ENCODE measurements at regions of chr14 and their contacts with region 1.

Region 1: DNA sequence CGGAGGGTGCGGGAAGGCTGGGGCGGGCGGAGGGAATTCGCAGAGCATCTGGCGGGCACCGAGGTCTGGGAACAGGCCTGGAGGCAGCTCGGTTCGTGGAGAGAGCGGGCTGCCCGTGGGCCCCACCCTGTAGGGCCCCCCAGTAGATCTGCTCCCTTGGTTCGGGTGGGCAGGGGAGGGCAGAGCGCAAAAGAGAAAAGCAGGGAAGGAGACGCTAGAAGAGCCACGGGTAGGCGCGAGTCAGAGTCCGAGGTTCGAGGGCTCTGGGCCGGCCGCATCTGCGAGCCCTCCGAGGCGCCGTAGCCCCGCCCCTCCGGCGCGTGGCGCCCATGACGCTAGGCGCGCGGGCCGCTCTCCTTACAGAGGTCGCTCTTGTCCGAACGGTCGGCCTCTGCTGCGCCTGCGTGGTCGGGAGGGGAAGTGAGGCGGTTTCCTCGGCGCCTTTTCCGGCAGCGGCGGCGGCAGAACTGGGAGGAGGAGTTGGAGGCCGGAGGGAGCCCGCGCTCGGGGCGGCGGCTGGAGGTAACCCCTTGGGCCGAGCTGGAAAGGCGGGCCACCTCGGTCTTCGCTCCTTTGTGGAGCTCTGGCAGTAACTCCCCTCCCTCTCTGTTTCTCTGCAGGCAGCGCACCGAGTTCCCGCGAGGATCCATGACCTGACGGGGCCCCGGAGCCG is at the start of gene ARF6:
- DNase-seq: peak; percentile 99
- ATAC-seq: peak; percentile 81
- H3K4me3 ChIP-seq: peak within 1 kb of the TSS; percentile 91
- H3K27ac ChIP-seq: peak within 1 kb of the TSS; percentile 94
- H3K4me1 ChIP-seq: peaks cover 24% of the 10 kb centered on the region
- H3K27me3 ChIP-seq: no peaks in the 10 kb centered on the region
- CTCF ChIP-seq: no peak
- total RNA-seq, gene ARF6: 86.4 and 107 TPM in 2 replicates

Region 2: GRCh38 chr14:49879683-49880204 is 13.0 kb before region 1 on chr14:
- CTCF ChIA-PET with region 1: interaction called, 5 read pairs
- POLR2A ChIA-PET with region 1: no interaction called
- intact Hi-C with region 1: loop called (anchors 1 kb)
- DNase-seq: peak; percentile 80
- ATAC-seq: peak; percentile 83
- H3K4me3 ChIP-seq: no peak overlapping the region
- H3K27ac ChIP-seq: no peak overlapping the region
- H3K4me1 ChIP-seq: peaks cover 10% of the 10 kb centered on the region; the same call in 1 of the 2 replicates
- H3K27me3 ChIP-seq: no peaks in the 10 kb centered on the region
- CTCF ChIP-seq: peak; percentile 79

Region 3: DNA sequence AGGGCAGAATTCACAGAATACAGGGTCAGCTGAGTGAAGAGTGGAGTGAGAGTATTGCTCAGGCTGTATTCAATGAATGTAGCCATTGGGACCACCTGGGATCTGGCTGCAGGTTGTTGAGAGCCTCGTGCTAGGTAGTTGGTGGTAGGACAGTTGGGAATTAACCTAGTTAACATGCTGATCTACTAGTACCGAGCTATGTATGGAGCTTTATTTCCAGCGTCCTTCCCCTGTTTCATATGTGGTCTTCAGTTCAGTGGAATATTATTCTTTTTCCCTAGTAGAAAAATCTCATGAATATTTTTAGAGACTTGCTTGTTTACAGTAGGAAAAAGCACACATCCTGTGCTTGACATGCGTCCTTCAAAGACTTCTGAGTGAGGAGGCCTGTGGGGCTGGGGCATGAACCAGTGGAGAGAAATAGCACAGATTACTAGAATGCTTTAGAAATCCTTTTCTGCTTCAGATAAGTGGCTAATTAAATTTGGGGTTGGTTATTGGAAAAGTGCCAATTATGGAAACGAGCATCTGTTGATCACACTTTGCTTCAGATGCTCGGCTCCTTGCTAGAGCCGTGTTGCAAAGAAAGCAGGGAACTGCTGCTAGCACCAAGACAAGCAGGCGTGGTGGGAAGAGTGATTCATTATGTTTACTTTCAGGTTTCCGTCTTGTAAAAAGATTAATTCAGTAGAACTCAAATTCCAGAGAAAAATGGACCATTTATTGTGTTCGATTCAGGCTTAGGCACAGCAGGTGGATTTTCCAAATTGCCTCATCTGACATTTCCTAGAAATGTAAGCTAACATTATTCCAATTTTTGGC is 53.8 kb after region 1 on chr14:
- CTCF ChIA-PET with region 1: no interaction called
- POLR2A ChIA-PET with region 1: interaction called, 7 read pairs
- intact Hi-C with region 1: loop called (anchors 2 kb)
- DNase-seq: peak; percentile 93
- ATAC-seq: peak; percentile 82
- H3K4me3 ChIP-seq: peak overlapping the region; percentile 23; the same call in 1 of the 2 replicates
- H3K27ac ChIP-seq: peak overlapping the region; percentile 65
- H3K4me1 ChIP-seq: peaks cover 50% of the 10 kb centered on the region
- H3K27me3 ChIP-seq: no peaks in the 10 kb centered on the region
- CTCF ChIP-seq: no peak

Region 4: DNA sequence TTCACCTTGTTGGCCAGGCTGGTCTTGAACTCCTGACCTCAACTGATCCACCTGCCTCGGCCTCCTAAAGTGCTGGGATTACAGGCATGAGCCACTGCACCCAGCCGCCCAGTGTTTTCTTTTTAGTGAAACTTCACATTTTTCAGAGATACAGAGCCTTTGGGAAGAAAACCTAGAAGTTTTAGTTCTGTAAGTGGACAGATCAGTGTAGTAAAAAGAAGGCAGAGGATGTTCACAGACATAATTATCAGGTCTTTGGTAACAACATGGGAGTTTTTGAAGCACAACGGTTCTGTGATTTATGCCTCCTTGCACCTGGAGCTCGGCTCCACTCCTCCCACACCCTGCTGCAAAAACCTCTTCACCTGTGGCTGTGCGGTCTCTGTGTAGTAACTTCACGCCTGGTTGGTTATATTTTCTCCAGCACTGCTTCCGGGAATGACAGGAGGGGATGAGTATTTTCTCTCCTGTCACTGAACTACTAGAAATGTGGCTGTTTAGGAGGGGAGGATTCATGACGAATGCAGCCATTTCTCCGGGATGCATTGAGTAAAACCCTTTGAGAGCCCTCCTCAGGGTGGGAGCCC is 67.1 kb after region 1 on chr14:
- CTCF ChIA-PET with region 1: no interaction called
- POLR2A ChIA-PET with region 1: no interaction called
- intact Hi-C with region 1: loop called (anchors 2 kb)
- DNase-seq: no peak
- ATAC-seq: no peak
- H3K4me3 ChIP-seq: no peak overlapping the region
- H3K27ac ChIP-seq: no peak overlapping the region
- H3K4me1 ChIP-seq: peaks cover 30% of the 10 kb centered on the region
- H3K27me3 ChIP-seq: no peaks in the 10 kb centered on the region
- CTCF ChIP-seq: no peak

Region 5: GRCh38 chr14:50060871-50061663 is 168.3 kb after region 1 on chr14:
- CTCF ChIA-PET with region 1: no interaction called
- POLR2A ChIA-PET with region 1: no interaction called
- intact Hi-C with region 1: loop called (anchors 5 kb)
- DNase-seq: peak; percentile 88
- ATAC-seq: peak; percentile 66
- H3K4me3 ChIP-seq: no peak overlapping the region
- H3K27ac ChIP-seq: peak overlapping the region; percentile 96
- H3K4me1 ChIP-seq: peaks cover 38% of the 10 kb centered on the region
- H3K27me3 ChIP-seq: no peaks in the 10 kb centered on the region
- CTCF ChIP-seq: peak; percentile 33; the same call in 1 of the 2 replicates

Region 6: GRCh38 chr14:50109342-50109741 is 216.6 kb after region 1 on chr14:
- CTCF ChIA-PET with region 1: no interaction called
- POLR2A ChIA-PET with region 1: no interaction called
- intact Hi-C with region 1: loop called (anchors 1 kb)
- DNase-seq: peak; percentile 38
- ATAC-seq: peak; percentile 16; the same call in 1 of the 2 replicates
- H3K4me3 ChIP-seq: no peak overlapping the region
- H3K27ac ChIP-seq: no peak overlapping the region
- H3K4me1 ChIP-seq: peaks cover 10% of the 10 kb centered on the region
- H3K27me3 ChIP-seq: no peaks in the 10 kb centered on the region
- CTCF ChIP-seq: peak; percentile 62

Region 7: GRCh38 chr14:50116181-50116956 is 223.6 kb after region 1 on chr14 and contains the start of gene VCPKMT:
- CTCF ChIA-PET with region 1: no interaction called
- POLR2A ChIA-PET with region 1: interaction called, 12 read pairs
- intact Hi-C with region 1: no loop called
- DNase-seq: peak; percentile 96
- ATAC-seq: peak; percentile 99
- H3K4me3 ChIP-seq: peak within 1 kb of the TSS; percentile 91
- H3K27ac ChIP-seq: peak within 1 kb of the TSS; percentile 67
- H3K4me1 ChIP-seq: peaks cover 23% of the 10 kb centered on the region
- H3K27me3 ChIP-seq: no peaks in the 10 kb centered on the region
- CTCF ChIP-seq: no peak
- total RNA-seq, gene VCPKMT: 8.2 and 8.8 TPM in 2 replicates

Measured in PC-3 (cell line).